ENCODE measurements at regions of chr5 and their contacts with region 1.

Region 1: DNA sequence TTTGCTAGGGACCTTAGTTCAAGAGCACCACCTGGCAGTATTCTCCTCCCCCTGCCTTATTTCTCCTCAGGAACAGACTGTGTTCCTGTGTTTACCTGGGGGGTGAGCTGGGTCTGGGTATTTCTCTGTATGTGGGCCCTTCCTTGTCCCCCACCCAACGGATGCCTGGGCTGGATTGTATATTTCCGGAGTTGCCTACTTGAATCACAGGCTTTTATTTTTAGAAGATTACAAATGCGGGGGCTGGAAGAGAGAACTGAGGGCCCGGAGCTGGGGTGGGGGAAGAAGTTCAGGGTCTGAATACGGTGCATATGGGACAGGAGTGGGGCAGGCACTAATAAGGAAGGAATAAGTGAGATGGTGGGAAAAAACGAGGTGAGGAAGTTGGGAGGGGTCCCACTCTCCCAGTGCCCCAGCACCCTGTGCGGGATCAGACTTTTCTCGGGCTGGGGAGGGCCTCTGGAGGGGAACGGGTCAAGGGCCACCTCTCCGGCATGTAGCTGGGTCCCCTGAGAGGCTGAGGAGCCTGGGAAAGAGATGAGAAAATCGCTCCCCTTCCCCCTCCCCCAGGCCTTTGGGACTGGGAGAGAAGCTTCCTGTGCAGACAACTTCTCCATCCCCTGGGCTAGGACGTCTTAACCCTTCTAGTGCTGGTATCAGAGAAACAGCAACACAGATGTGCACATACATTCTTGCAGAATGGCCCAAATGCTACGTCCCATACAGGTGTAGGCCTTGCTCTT is 42.1 kb downstream of the PCDH1 start:
- DNase-seq: no peak
- ATAC-seq: no peak
- H3K4me3 ChIP-seq: no peak overlapping the region
- H3K27ac ChIP-seq: no peak overlapping the region
- H3K4me1 ChIP-seq: peaks cover 19 to 39% of the 10 kb centered on the region in 2 experiments
- H3K27me3 ChIP-seq: no peaks in the 10 kb centered on the region
- CTCF ChIP-seq: no peak
- POLR2A ChIP-seq: no peak
- RAD21 ChIP-seq: no peak

Region 2: DNA sequence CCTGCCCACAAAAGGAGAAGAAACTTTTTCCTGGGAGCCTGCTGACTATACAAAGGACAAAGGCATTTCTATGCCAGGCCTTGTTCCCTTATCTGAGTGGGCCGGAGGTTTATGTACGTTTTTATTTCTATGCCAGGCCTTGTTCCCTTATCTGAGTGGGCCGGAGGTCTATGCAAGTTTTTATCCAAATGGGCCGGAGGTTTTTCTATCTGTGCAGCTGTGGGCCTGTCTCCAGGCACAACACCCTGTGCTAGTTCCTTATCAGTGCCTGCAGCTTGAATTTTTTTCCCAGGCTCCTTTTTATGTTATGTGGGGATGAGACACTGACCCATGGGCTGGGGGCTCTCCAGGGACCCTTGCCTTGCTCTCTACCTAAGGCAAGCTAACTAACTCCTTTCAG is 537.7 kb before region 1 on chr5:
- CTCF ChIA-PET with region 1: no interaction called
- POLR2A ChIA-PET with region 1: no interaction called
- RAD21 ChIA-PET with region 1: no interaction called
- intact Hi-C with region 1: no loop called
- DNase-seq: no peak
- ATAC-seq: no peak
- H3K4me3 ChIP-seq: no peak overlapping the region
- H3K27ac ChIP-seq: no peak overlapping the region
- H3K4me1 ChIP-seq: no peaks in the 10 kb centered on the region
- H3K27me3 ChIP-seq: no peaks in the 10 kb centered on the region
- CTCF ChIP-seq: no peak
- POLR2A ChIP-seq: no peak
- RAD21 ChIP-seq: no peak

Region 3: GRCh38 chr5:141849375-141850243 is 13.5 kb after region 1 on chr5:
- CTCF ChIA-PET with region 1: interaction called, 10 read pairs
- POLR2A ChIA-PET with region 1: interaction called, 4 read pairs
- RAD21 ChIA-PET with region 1: interaction called in 1 of 2 experiments, 3 read pairs
- intact Hi-C with region 1: no loop called
- DNase-seq: no peak
- ATAC-seq: peak; percentile 75
- H3K4me3 ChIP-seq: peak overlapping the region; percentile 86 to 87
- H3K27ac ChIP-seq: peak overlapping the region; percentile 95
- H3K4me1 ChIP-seq: peaks cover 30 to 46% of the 10 kb centered on the region in 2 experiments
- H3K27me3 ChIP-seq: no peaks in the 10 kb centered on the region
- CTCF ChIP-seq: 0 out of 6 replicates have a peak, but pooled peaks of 1 of the 3 experiments have one; percentile 6
- POLR2A ChIP-seq: peak; percentile 69
- RAD21 ChIP-seq: no peak

Measured in HCT116 (cell line).